GM10248 (cell line): ENCODE measurements at regions of chr20 and their contacts with region 1.

Region 1: DNA sequence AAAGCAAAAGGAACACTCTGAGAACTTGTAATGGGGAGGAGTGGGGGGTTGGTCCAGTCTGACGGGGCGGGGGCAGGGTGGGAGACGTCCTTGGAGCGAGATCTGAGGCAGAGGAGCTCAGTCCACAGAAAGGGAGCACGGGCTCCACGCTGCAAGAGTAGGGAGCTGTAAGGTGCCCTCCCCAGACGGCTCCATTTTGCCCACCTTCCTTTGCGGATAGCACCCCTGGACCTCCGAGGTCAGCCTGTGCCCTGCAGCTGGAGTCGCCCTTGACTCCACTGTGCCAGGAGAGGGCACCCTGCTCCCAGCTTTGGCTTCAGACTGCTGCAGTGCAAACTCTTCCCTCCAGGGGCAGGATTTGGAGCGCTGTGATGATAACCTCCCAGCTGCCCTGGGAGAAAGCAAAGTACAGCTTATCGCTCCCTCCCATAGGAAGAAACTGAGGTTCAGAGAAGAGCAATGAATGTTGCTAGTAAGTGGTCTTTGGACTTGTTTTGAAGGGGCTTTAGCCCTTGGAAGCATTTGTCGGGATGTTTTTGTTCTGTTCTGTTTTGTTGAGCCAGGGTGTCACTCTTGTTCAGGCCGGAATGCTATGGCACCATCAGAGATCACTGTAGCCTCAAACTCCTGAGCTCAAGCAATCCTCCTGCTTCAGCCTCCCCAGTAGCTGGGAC is 9.5 kb upstream of the AHCY start:
- DNase-seq: peak; percentile 88
- CTCF ChIP-seq: peak; percentile 100

Region 2: GRCh38 chr20:34180460-34181120 is 132.1 kb before region 1 on chr20:
- CTCF ChIA-PET with region 1: no interaction called
- POLR2A ChIA-PET with region 1: no interaction called
- DNase-seq: no peak
- CTCF ChIP-seq: no peak

Region 3: DNA sequence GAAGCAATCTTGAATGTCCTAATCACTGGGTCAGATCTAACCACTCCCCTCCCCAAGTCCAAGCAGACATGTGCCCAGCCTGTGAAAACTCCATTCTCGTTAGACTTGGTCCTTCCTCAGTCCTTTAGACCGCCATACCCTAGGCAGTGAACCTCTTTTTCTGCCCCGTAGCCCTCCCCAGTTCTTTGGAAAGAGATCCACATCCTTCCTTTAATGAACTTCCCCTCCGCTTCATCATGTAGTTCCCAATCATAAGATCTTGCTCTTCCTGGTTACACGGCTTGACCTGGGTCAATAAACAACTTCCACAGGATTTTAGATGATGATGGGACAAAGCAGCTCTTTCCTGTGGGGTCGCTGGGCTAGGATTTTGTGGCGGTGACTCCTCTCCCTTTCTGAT is 19.1 kb before region 1 on chr20:
- CTCF ChIA-PET with region 1: interaction called, 31 read pairs
- POLR2A ChIA-PET with region 1: no interaction called
- DNase-seq: no peak
- CTCF ChIP-seq: no peak

Region 4: GRCh38 chr20:34363062-34363464 is 50.4 kb after region 1 on chr20 and contains the start of gene ITCH:
- CTCF ChIA-PET with region 1: interaction called, 19 read pairs
- POLR2A ChIA-PET with region 1: no interaction called
- DNase-seq: peak; percentile 96
- CTCF ChIP-seq: no peak

Region 5: GRCh38 chr20:34479627-34480026 is 166.9 kb after region 1 on chr20:
- CTCF ChIA-PET with region 1: interaction called, 18 read pairs
- POLR2A ChIA-PET with region 1: no interaction called
- DNase-seq: no peak
- CTCF ChIP-seq: no peak

Region 6: DNA sequence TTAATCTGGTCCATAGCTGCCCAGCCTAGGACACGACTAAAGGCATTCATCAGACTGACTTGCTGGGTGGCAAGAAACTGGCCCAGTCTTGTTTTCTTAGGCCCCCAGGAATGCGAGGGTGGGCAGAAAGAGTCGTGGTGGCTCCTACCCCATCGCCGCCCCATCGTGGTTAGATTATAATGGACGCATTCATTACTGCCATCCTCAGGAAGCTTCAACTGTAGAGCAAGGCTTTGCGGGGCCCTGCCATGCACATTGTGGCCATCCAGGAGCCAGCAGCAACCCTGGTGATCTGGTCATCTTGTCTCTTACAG is 219.7 kb after region 1 on chr20:
- CTCF ChIA-PET with region 1: interaction called, 81 read pairs
- POLR2A ChIA-PET with region 1: no interaction called
- DNase-seq: no peak
- CTCF ChIP-seq: no peak

Region 7: GRCh38 chr20:34720266-34720665 is 407.6 kb after region 1 on chr20:
- CTCF ChIA-PET with region 1: interaction called, 23 read pairs
- POLR2A ChIA-PET with region 1: no interaction called
- DNase-seq: no peak
- CTCF ChIP-seq: no peak